ENCODE measurements at regions of chr3 and their contacts with region 1.

Region 1: GRCh38 chr3:138974462-138974861 is 27.4 kb downstream of the FOXL2NB start:
- DNase-seq: no peak
- ATAC-seq: no peak
- H3K4me3 Mint-ChIP-seq: no peak overlapping the region
- H3K27ac Mint-ChIP-seq: no peak overlapping the region
- H3K4me1 Mint-ChIP-seq: no peaks in the 10 kb centered on the region
- H3K27me3 Mint-ChIP-seq: peaks cover 6% of the 10 kb centered on the region

Region 2: DNA sequence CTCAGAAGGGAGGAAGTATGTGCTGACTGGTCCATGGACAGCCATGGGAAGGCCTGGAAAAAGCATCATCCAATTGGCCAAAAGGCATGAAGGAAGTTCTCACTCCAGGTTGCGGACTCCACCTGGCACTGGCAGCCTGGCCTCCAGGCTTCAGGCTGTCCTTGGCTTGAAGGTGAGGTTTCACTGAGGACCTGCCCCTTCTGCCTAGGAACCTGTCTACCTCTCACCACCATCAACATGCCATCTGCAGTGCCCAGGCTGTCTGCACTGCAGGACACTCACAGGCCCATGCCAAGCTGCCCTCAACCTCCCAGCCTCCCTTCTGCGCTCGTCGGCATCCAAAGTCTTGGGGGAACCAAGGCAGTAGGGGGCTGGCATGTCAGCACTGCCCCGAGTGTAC is 431.5 kb before region 1 on chr3:
- CTCF ChIA-PET with region 1: no interaction called
- POLR2A ChIA-PET with region 1: no interaction called
- intact Hi-C with region 1: no loop called
- DNase-seq: no peak
- ATAC-seq: no peak
- H3K4me3 Mint-ChIP-seq: no peak overlapping the region
- H3K27ac Mint-ChIP-seq: no peak overlapping the region
- H3K4me1 Mint-ChIP-seq: no peaks in the 10 kb centered on the region
- H3K27me3 Mint-ChIP-seq: no peaks in the 10 kb centered on the region

Region 3: GRCh38 chr3:138946181-138947059 is 28.0 kb before region 1 on chr3:
- CTCF ChIA-PET with region 1: interaction called, 6 read pairs
- POLR2A ChIA-PET with region 1: no interaction called
- intact Hi-C with region 1: loop called in 1 of 2 experiments (anchors 2 kb)
- DNase-seq: peak; percentile 58
- ATAC-seq: no peak
- H3K4me3 Mint-ChIP-seq: peak overlapping the region; percentile 45
- H3K27ac Mint-ChIP-seq: no peak overlapping the region
- H3K4me1 Mint-ChIP-seq: peaks cover 33% of the 10 kb centered on the region
- H3K27me3 Mint-ChIP-seq: peaks cover 71% of the 10 kb centered on the region

Measured in activated CD4-positive, alpha-beta T cell treated with anti-CD3 and anti-CD28 coated beads for 36 hours (primary cell).